ENCODE measurements at regions of chr14 and their contacts with region 1.

Region 1: DNA sequence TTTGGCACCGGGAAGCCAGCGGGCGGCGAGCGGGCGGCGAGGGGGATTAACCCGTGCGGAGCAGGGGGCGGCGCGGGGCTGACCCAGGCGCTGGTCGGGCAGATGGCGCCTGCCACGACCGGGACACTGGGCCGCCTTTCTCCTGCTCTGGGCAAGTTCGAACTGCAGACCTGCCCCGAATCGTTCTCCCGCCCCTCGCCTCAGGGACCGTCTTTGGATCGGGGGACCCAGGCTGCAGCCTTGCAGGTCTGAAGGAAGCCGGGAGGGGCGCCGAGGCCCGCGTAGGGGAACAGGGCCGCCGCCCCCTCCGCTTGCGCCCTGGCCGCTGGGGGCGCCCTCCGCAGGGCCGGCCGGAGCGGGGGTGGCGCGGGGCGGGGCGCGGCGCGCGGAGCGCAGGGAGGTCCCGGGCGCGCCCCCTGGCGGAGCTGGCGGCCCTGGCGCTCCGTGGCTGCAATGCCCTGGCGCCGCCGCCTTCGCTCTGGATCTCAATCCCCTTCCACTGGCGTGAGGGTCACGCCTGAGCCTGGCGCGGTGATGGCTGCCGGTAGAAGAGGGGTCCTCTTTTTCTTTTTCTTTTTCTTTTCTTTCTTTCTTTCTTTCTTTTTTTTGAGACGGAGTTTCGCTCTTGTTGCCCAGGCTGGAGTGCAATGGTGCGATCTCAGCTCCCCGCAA is 449 bp upstream of the LTBP2 start:
- DNase-seq: peak; percentile 84
- ATAC-seq: peak; percentile 90
- H3K4me3 Mint-ChIP-seq: peak overlapping the region; percentile 73
- H3K27ac Mint-ChIP-seq: no peak overlapping the region
- H3K4me1 Mint-ChIP-seq: peaks cover 22% of the 10 kb centered on the region
- H3K27me3 Mint-ChIP-seq: peaks cover 49% of the 10 kb centered on the region

Region 2: GRCh38 chr14:74290415-74290814 is 322.1 kb before region 1 on chr14:
- CTCF ChIA-PET with region 1: no interaction called
- POLR2A ChIA-PET with region 1: no interaction called
- DNase-seq: peak; percentile 34
- ATAC-seq: peak; percentile 50
- H3K4me3 Mint-ChIP-seq: no peak overlapping the region
- H3K27ac Mint-ChIP-seq: no peak overlapping the region
- H3K4me1 Mint-ChIP-seq: no peaks in the 10 kb centered on the region
- H3K27me3 Mint-ChIP-seq: no peaks in the 10 kb centered on the region

Region 3: DNA sequence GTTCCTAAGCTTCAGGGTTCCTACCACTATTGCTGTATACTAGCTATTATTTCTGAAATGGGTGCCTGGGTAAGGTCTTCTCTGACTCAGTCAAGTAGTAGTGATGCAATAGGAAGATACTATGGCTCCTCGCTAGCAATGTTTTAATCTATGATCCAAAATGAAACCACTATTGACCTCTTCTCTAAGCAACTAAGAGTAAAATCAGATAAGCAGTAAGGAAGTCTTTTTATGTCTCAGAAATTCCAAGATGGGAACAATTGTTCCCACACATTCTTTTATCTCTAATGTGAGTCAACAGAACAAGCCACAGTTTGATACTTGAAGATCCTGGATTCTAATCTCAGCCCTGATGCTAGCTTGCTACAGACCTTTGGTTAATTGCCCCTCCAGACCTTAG is 55.3 kb after region 1 on chr14:
- CTCF ChIA-PET with region 1: interaction called, 10 read pairs
- POLR2A ChIA-PET with region 1: no interaction called
- DNase-seq: no peak
- ATAC-seq: no peak
- H3K4me3 Mint-ChIP-seq: no peak overlapping the region
- H3K27ac Mint-ChIP-seq: no peak overlapping the region
- H3K4me1 Mint-ChIP-seq: peaks cover 2% of the 10 kb centered on the region
- H3K27me3 Mint-ChIP-seq: no peaks in the 10 kb centered on the region

Region 4: GRCh38 chr14:74762917-74763802 is 150.7 kb after region 1 on chr14 and contains the start of gene YLPM1:
- CTCF ChIA-PET with region 1: interaction called, 29 read pairs
- POLR2A ChIA-PET with region 1: interaction called, 3 read pairs
- DNase-seq: peak; percentile 94
- ATAC-seq: peak; percentile 95
- H3K4me3 Mint-ChIP-seq: peak within 1 kb of the TSS; percentile 92
- H3K27ac Mint-ChIP-seq: peak within 1 kb of the TSS; percentile 86
- H3K4me1 Mint-ChIP-seq: peaks cover 40% of the 10 kb centered on the region
- H3K27me3 Mint-ChIP-seq: peaks cover 2% of the 10 kb centered on the region
- total RNA-seq, gene YLPM1: 58.2 to 58.4 TPM

Region 5: DNA sequence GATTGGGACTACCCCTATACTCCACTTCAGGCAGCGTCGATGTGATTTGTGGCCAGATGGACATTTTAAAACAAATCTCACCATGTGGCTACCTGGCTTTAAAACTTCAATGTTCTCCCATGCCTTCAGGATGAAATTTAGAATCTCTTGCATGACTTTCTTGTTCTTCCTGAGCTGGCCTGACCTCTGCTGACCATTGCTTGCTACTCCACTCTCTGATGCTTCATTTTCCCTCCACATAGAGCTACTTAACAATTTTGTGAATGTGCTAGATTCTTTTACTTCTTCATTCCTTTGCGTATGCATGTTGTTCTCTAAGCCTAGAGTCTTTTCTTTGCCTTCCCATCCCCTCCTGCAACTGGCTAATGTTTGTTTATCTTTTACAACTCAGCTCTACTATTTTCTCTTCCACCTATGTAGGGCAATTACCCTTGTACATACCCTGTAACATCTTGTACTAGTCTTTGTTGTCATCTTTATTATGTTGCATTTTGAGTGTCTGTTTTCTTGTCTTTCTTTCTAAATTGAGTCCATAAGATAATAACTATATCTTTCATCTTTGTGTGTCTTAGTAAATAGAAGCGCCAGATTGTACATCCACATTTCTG is 191.8 kb after region 1 on chr14:
- CTCF ChIA-PET with region 1: interaction called, 62 read pairs
- POLR2A ChIA-PET with region 1: no interaction called
- DNase-seq: peak; percentile 51
- ATAC-seq: peak; percentile 68
- H3K4me3 Mint-ChIP-seq: no peak overlapping the region
- H3K27ac Mint-ChIP-seq: no peak overlapping the region
- H3K4me1 Mint-ChIP-seq: no peaks in the 10 kb centered on the region
- H3K27me3 Mint-ChIP-seq: no peaks in the 10 kb centered on the region

Region 6: GRCh38 chr14:74852927-74853514 is 240.5 kb after region 1 on chr14:
- CTCF ChIA-PET with region 1: interaction called, 18 read pairs
- POLR2A ChIA-PET with region 1: no interaction called
- DNase-seq: no peak
- ATAC-seq: peak; percentile 49
- H3K4me3 Mint-ChIP-seq: no peak overlapping the region
- H3K27ac Mint-ChIP-seq: no peak overlapping the region
- H3K4me1 Mint-ChIP-seq: peaks cover 18% of the 10 kb centered on the region
- H3K27me3 Mint-ChIP-seq: no peaks in the 10 kb centered on the region

Measured in activated CD8-positive, alpha-beta T cell treated with anti-CD3 and anti-CD28 coated beads, Interleukin-2, amount 10 ng/mL, durations not matched to agents 7 days and 5 days (primary cell).